Activated CD8-positive, alpha-beta T cell treated with anti-CD3 and anti-CD28 coated beads for 36 hours (primary cell): ENCODE measurements at regions of chr5 and their contacts with region 1.

Region 1: DNA sequence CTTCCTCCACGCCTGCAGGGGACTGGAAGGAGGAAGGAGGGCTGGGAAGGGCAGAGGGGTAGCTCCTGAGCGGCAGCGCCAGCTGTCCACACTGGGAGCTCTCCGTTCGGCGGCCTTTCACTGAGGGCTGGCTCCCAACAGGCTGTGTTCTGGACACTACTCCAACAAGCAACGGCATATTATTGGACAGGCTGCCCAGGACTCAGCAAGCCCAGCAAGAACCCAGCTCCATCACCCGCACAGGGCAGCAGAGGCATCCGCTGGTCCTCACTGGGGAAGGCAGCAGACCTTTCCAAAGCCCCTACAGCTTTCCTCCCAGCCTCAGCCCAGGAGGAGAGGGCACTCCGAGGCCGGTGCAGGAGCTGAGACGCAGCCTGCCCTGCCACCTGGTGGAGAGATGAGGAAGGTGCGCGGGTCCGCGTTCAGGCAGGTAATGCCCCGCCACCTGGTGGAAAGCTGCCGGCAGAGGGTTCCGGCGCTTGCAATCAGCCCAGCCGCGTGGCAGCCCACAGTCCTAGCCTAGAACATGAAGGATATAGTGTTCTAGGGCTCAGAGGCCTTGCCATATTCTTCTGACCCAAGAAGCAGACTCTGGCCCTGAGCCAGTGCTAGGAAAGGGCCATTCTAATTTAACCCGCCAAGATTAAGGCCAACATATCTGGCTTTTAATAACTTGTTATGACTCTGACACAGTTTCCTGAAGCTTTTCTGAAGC is 74.4 kb downstream of the NRG2 start:
- DNase-seq: peak; percentile 94
- ATAC-seq: peak; percentile 100
- H3K4me3 Mint-ChIP-seq: no peak overlapping the region
- H3K27ac Mint-ChIP-seq: no peak overlapping the region
- H3K4me1 Mint-ChIP-seq: no peaks in the 10 kb centered on the region
- H3K27me3 Mint-ChIP-seq: peaks cover 13% of the 10 kb centered on the region
- CTCF ChIP-seq: peak; percentile 99

Region 2: DNA sequence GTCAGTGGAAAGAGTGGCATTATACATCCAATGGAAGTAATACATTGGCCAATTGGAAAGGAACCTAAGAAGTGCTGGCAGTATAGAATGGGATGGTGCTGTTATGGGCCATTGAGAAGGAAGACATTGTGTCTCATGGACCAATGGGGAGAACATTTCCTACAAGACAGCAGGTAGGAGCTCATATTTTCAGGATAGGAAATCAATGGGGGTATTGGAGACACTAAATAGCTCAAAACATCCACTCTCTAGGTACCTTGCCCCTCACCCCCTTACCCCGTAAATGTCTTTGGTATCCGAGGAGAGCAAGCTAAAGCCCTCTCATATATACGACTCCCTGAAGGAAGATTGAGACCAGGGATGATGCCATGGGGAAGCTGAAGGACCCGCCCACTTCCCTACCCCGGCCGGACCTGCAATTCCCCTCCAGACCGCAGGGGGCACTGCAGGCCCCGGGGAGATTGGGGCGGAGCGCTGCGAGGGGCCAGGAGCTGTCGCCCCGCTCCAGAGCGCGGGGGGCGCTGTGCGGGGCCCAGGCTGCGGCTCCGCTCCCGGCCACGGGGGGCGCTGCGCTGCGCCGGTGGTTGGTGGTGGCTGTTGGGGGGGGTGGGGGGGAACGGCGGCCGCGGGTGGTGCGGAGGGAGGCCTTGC is 1616.5 kb before region 1 on chr5 and contains the start of gene KDM3B:
- CTCF ChIA-PET with region 1: no interaction called
- POLR2A ChIA-PET with region 1: no interaction called
- intact Hi-C with region 1: no loop called
- DNase-seq: peak; percentile 88
- ATAC-seq: peak; percentile 91
- H3K4me3 Mint-ChIP-seq: peak within 1 kb of the TSS; percentile 92
- H3K27ac Mint-ChIP-seq: peak within 1 kb of the TSS; percentile 91
- H3K4me1 Mint-ChIP-seq: peaks cover 45% of the 10 kb centered on the region
- H3K27me3 Mint-ChIP-seq: no peaks in the 10 kb centered on the region
- CTCF ChIP-seq: peak; percentile 99
- total RNA-seq, gene KDM3B: 41.6 to 41.9 TPM

Region 3: GRCh38 chr5:139787568-139788293 is 181.0 kb before region 1 on chr5:
- CTCF ChIA-PET with region 1: interaction called, 186 read pairs
- POLR2A ChIA-PET with region 1: no interaction called
- intact Hi-C with region 1: loop called (anchors 2 kb)
- DNase-seq: peak; percentile 89
- ATAC-seq: peak; percentile 90
- H3K4me3 Mint-ChIP-seq: peak overlapping the region; percentile 71
- H3K27ac Mint-ChIP-seq: no peak overlapping the region
- H3K4me1 Mint-ChIP-seq: no peaks in the 10 kb centered on the region
- H3K27me3 Mint-ChIP-seq: peaks cover 13% of the 10 kb centered on the region
- CTCF ChIP-seq: peak; percentile 96

Region 4: DNA sequence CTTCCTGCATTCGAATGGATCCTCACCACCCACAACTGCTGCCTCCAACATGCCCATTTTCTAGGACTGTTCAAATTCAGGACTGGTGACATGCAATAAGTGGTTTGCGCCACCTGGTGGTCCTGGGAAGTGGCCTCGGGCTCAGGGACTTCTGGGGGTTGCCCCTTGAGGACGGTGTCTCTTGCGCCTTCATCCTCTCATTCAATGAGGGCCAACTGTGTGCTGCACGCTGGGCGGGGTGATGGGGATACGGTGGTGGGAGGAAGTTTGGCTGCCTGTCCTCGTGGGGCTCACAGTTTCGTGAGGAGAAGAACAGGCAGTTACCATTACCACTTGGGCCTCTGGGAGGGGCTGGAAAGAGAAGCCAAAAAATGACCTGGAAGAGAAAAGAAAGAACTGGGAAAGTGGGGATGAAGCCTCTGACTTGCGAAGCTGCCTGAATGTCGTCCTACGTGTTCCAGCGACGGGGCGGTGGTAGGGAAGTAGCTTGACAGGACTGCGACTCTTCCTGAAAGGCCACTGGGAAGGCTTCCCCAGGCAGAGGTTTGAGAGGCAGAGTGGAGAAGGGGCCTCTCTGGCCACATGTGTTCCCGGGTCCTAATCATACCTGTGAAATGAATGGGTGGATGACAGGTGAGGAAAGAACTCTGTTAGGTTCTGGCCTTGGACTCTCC is 124.1 kb before region 1 on chr5:
- CTCF ChIA-PET with region 1: interaction called, 53 read pairs
- POLR2A ChIA-PET with region 1: no interaction called
- intact Hi-C with region 1: no loop called
- DNase-seq: peak; percentile 93
- ATAC-seq: peak; percentile 65
- H3K4me3 Mint-ChIP-seq: no peak overlapping the region
- H3K27ac Mint-ChIP-seq: no peak overlapping the region
- H3K4me1 Mint-ChIP-seq: peaks cover 15% of the 10 kb centered on the region
- H3K27me3 Mint-ChIP-seq: peaks cover 12% of the 10 kb centered on the region
- CTCF ChIP-seq: peak; percentile 91

Region 5: DNA sequence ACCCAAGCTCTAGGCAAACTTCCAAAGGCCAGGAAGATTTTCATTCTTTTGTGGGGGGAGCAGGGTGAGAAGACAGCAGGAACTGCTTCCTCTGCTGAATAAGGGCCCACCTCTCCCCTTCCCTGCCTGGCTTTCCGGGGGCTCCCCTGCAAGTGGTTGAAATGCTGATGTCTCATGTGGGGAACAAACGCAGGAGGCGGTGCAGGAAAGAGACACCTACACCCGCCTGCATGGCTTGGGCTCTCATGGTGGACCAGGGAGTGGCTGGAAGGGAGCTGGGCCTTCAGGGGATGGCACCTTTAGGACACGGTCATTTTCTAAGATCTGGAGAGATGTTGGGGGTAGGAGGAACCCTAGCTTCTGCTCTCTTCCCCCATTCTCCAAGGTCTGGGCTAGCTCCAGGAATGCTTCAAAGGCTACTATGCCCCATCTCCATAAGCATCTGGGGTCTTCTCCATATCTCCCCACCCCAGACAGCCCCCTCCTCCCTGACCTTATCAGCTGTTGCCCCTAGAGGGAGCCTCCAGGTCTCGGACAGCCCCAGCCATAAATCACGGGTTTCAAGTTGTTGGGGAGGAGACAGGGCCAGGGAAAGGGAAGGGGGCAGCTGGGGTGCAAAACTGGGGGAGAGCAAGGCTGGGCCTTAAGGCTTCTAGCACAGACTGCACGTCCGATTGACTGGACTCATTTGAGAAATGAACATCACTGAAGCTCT is 96.5 kb before region 1 on chr5:
- CTCF ChIA-PET with region 1: interaction called, 22 read pairs
- POLR2A ChIA-PET with region 1: no interaction called
- intact Hi-C with region 1: no loop called
- DNase-seq: no peak
- ATAC-seq: no peak
- H3K4me3 Mint-ChIP-seq: no peak overlapping the region
- H3K27ac Mint-ChIP-seq: no peak overlapping the region
- H3K4me1 Mint-ChIP-seq: no peaks in the 10 kb centered on the region
- H3K27me3 Mint-ChIP-seq: peaks cover 9% of the 10 kb centered on the region
- CTCF ChIP-seq: no peak

Region 6: DNA sequence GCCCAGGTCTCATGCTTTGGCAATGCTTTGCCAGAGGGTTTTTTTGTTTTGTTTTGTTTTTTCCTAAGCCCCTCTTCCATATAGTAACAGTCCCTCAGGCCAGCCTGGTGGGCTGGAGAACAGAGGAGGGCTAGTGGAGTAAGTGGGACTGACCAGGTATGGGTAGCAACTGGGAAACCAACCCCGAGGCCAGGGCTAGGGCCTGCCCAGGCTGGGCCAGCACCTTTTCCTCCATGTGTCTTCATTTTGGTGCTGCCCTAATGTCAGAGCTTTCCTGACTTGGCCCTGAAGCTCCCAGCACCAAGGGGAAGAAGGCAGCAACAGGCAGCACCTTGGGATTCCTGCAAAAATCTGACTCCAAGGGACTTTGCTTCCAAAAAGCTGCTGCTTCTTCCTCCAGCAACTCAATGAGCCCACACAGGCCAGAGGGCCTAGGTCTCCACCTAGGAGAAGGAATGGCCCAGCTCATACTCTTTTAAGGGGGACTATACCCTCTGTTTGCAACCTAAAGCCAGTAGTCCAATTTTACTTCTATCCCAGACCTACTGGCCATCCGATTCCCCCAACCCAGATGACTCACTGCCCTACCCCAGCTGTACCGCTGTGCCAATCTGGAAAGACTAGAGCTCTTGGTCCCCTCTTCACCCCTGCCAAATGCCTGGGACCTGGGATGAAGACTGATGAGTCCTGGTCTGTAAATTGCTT is 68.0 kb before region 1 on chr5:
- CTCF ChIA-PET with region 1: interaction called, 24 read pairs
- POLR2A ChIA-PET with region 1: no interaction called
- intact Hi-C with region 1: no loop called
- DNase-seq: no peak
- ATAC-seq: no peak
- H3K4me3 Mint-ChIP-seq: no peak overlapping the region
- H3K27ac Mint-ChIP-seq: no peak overlapping the region
- H3K4me1 Mint-ChIP-seq: peaks cover 5% of the 10 kb centered on the region
- H3K27me3 Mint-ChIP-seq: peaks cover 25% of the 10 kb centered on the region
- CTCF ChIP-seq: no peak

Region 7: GRCh38 chr5:139942243-139942642 is 26.5 kb before region 1 on chr5:
- CTCF ChIA-PET with region 1: interaction called, 18 read pairs
- POLR2A ChIA-PET with region 1: no interaction called
- intact Hi-C with region 1: no loop called
- DNase-seq: no peak
- ATAC-seq: no peak
- H3K4me3 Mint-ChIP-seq: no peak overlapping the region
- H3K27ac Mint-ChIP-seq: no peak overlapping the region
- H3K4me1 Mint-ChIP-seq: no peaks in the 10 kb centered on the region
- H3K27me3 Mint-ChIP-seq: peaks cover 31% of the 10 kb centered on the region
- CTCF ChIP-seq: no peak

Region 8: DNA sequence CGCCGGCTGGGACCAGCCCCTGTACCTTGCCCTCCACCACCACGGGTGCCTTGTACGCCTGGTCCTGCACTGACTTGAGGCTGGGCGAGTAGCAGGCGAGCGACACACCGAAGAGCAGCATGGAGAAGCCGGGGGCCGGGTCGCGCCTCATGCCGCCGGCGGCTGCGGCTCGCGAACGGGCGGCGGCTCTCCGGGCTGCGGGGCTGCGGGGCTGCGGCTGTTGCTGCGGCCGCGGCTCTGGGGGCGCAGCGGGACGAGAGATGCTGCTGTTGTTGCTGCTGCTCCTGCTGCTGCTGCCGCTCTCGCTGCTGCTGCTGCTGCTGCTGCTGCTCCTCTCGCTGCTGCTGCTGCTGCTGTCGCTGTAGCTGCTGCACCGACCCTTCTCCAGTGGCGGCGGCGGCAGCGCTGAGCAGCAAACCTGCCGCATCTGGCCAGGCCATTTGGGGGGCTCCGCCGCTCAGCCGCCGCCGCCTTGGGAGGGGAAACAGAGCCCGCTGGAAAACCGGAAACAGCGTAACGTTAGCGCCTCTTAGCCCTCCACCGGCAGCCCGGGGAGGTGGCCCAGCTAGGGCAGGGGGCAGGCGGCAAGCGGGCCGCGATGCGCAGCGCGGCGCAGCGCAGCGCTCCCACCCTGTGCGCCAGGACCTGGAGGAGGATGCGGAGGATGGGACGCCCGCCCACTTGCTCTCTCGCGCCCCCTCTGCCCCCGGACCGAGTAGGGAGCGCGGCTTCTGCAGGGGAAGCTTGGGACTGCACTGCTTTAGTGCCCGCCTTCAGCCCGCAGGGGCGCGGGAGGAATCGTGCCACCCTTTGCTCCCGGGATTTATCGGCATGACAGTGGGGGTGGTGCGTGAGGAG is 74.2 kb after region 1 on chr5 and contains the start of gene NRG2:
- CTCF ChIA-PET with region 1: interaction called, 12 read pairs
- POLR2A ChIA-PET with region 1: interaction called, 3 read pairs
- intact Hi-C with region 1: no loop called
- DNase-seq: peak; percentile 47
- ATAC-seq: peak; percentile 81
- H3K4me3 Mint-ChIP-seq: peak within 1 kb of the TSS; percentile 66
- H3K27ac Mint-ChIP-seq: no peak within 1 kb of the TSS
- H3K4me1 Mint-ChIP-seq: peaks cover 8% of the 10 kb centered on the region
- H3K27me3 Mint-ChIP-seq: peaks cover 50% of the 10 kb centered on the region
- CTCF ChIP-seq: peak; percentile 36
- total RNA-seq, gene NRG2: 0.11 TPM in 1 of 2 experiments, not detected in the other